ENCODE measurements at regions of chr15 and their contacts with region 1.

Region 1: DNA sequence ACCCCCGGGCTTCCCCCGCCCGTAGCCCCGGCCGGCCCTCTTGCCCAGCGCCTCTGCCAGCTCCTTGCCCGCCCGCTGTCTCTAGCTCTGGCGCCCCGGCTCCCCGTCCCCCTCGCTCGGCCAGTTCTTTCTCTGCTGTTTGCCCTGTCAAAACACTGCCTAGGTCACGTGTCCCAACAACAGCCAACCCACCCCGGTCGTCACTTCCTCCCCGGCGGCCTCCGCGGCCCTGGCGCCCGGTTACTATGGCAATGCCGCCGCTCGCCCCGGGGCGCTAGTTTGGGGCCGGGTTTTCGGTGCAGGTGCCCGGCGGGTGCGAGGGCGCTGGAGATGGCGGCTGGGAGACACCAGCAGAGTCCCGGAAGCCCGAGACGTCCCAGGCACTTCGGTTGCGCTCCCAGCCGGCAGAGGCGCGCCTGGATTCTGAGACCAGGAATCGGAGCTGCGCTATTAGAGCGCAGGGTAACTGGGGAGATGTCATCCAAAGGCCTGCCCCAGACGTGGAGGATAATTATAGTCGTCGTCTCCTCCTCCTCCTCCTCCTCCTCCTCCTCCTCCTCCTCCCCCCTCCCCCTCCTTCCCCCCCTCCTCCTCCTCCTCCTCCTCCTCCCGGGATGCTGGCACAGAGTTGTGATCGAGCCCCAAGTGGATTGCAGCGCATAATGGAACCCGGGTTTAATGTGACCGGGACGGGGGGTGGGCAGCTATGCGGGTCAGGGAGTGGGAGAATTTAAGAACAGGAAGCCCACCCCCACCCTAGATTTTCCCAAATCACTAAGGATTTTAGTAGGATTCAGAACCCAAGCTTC is at the start of gene ATOSA:
- DNase-seq: peak; percentile 84 to 93 (median 90)
- ATAC-seq: peak; percentile 87
- H3K4me3 ChIP-seq: peak within 1 kb of the TSS; percentile 82
- H3K4me3 Mint-ChIP-seq: peak within 1 kb of the TSS; percentile 91 to 100 (median 96)
- H3K27ac ChIP-seq: peak within 1 kb of the TSS; percentile 99
- H3K27ac Mint-ChIP-seq: peak within 1 kb of the TSS; percentile 94 to 100 (median 99)
- H3K4me1 ChIP-seq: peaks cover 35 to 54% of the 10 kb centered on the region in 2 donors
- H3K4me1 Mint-ChIP-seq: peaks cover 31 to 61% (median 46%) of the 10 kb centered on the region in 7 donors
- H3K27me3 ChIP-seq: no peaks in the 10 kb centered on the region
- H3K27me3 Mint-ChIP-seq: peaks cover 0 to 12% (median 0%) of the 10 kb centered on the region in 5 donors
- total RNA-seq, gene ATOSA: 35.1 to 117 (median 95.7) TPM

Region 2: GRCh38 chr15:52256366-52256765 is 423.1 kb before region 1 on chr15:
- CTCF ChIA-PET with region 1: no interaction called
- POLR2A ChIA-PET with region 1: no interaction called
- intact Hi-C with region 1: loop called (anchors 1 to 2 kb)
- DNase-seq: peak; percentile 27 to 80 (median 75)
- ATAC-seq: peak; percentile 98
- H3K4me3 ChIP-seq: peak overlapping the region; percentile 14
- H3K4me3 Mint-ChIP-seq: peak overlapping the region; percentile 49 to 85 (median 72)
- H3K27ac ChIP-seq: no peak overlapping the region
- H3K27ac Mint-ChIP-seq: peak overlapping the region; percentile 4 to 96 (median 65)
- H3K4me1 ChIP-seq: peaks cover 0 to 12% of the 10 kb centered on the region in 2 donors
- H3K4me1 Mint-ChIP-seq: peaks cover 5 to 55% (median 17%) of the 10 kb centered on the region in 7 donors
- H3K27me3 ChIP-seq: no peaks in the 10 kb centered on the region
- H3K27me3 Mint-ChIP-seq: no peaks in the 10 kb centered on the region

Region 3: GRCh38 chr15:52392008-52392687 is 287.3 kb before region 1 on chr15:
- CTCF ChIA-PET with region 1: no interaction called
- POLR2A ChIA-PET with region 1: no interaction called
- intact Hi-C with region 1: no loop called
- DNase-seq: no peak
- ATAC-seq: no peak
- H3K4me3 ChIP-seq: no peak overlapping the region
- H3K4me3 Mint-ChIP-seq: no peak overlapping the region
- H3K27ac ChIP-seq: no peak overlapping the region
- H3K27ac Mint-ChIP-seq: no peak overlapping the region
- H3K4me1 ChIP-seq: no peaks in the 10 kb centered on the region
- H3K4me1 Mint-ChIP-seq: peaks cover 0 to 5% (median 0%) of the 10 kb centered on the region in 7 donors
- H3K27me3 ChIP-seq: no peaks in the 10 kb centered on the region
- H3K27me3 Mint-ChIP-seq: no peaks in the 10 kb centered on the region

Region 4: DNA sequence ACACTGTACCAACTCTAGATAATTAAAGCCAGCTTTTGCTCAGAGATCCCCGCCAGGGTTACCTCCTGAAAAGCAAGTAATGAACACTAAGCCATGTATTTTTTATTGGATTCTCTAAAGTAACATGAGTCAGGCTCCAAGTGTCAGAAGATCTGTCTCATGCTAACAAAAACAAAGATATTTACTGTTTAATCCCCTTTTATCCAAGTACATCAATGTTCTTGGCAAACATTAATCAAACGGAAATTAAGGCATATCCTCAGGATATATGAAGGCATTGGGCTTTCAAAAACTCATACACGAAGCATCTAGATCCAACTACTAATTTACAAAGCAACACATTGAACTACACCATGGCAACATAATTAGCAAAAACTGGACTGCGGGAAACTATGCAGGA is 188.0 kb before region 1 on chr15:
- CTCF ChIA-PET with region 1: no interaction called
- POLR2A ChIA-PET with region 1: no interaction called
- intact Hi-C with region 1: loop called in 1 of 2 experiments (anchors 2 kb)
- DNase-seq: no peak
- ATAC-seq: no peak
- H3K4me3 ChIP-seq: no peak overlapping the region
- H3K4me3 Mint-ChIP-seq: no peak overlapping the region
- H3K27ac ChIP-seq: no peak overlapping the region
- H3K27ac Mint-ChIP-seq: no peak overlapping the region
- H3K4me1 ChIP-seq: peaks cover 5 to 19% of the 10 kb centered on the region in 2 donors
- H3K4me1 Mint-ChIP-seq: peaks cover 40 to 69% (median 47%) of the 10 kb centered on the region in 7 donors
- H3K27me3 ChIP-seq: no peaks in the 10 kb centered on the region
- H3K27me3 Mint-ChIP-seq: no peaks in the 10 kb centered on the region

Region 5: DNA sequence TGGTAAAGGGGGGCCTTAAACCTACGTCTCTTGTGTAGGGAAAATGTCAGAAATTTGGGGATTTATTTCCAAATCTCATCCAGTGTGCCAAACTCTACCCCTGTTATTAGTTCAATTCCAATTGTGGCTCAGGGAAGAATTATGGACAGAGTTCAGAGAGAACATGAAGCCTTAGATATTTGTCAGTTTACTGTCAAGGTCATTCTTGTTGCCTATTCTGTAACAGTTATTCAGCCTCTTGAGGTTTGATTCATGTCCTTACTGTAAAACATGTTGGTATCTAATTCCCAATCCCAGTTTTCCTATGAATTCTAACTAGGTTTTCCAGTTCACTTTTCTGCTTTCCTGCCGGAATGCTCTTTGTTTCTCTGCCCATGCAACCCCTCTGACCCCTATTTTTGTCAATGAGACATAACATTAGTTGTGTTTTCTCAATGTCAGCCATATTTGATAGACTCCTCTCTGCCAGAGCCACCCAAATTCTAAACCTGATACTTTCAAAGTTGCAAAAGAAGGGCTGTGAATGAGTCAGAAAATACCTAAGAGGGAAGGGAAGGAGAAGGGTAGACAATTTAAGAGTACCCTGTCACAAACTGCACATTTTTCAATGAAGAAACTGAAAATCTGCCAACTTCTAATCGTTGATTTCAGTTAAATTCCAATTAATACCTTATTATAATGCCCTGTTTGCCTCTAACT is 52.6 kb before region 1 on chr15:
- CTCF ChIA-PET with region 1: no interaction called
- POLR2A ChIA-PET with region 1: no interaction called
- intact Hi-C with region 1: loop called in 1 of 2 experiments (anchors 10 kb)
- DNase-seq: no peak
- ATAC-seq: no peak
- H3K4me3 ChIP-seq: no peak overlapping the region
- H3K4me3 Mint-ChIP-seq: no peak overlapping the region
- H3K27ac ChIP-seq: no peak overlapping the region
- H3K27ac Mint-ChIP-seq: no peak overlapping the region
- H3K4me1 ChIP-seq: no peaks in the 10 kb centered on the region
- H3K4me1 Mint-ChIP-seq: peaks cover 3 to 22% (median 13%) of the 10 kb centered on the region in 7 donors
- H3K27me3 ChIP-seq: no peaks in the 10 kb centered on the region
- H3K27me3 Mint-ChIP-seq: no peaks in the 10 kb centered on the region

Region 6: DNA sequence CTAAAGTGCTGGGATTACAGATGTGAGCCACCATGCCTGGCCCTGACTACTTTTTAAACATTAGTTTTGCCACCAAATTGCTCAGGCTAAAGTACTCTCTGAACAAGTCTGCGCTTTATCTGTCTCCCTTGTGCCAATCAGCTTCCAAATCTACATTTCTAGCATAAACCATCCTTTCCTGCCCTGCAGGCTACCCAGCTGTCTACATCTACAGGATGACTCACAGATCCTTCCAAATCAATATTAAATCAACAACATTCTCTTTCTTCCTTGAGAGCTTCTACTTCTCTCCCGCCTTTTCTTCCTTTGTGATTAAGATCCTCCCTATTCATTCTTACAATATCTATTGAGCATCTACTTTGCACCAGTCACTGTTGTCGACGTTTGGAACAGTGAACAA is 15.7 kb after region 1 on chr15:
- CTCF ChIA-PET with region 1: no interaction called
- POLR2A ChIA-PET with region 1: interaction called, 15 read pairs
- intact Hi-C with region 1: no loop called
- DNase-seq: no peak
- ATAC-seq: no peak
- H3K4me3 ChIP-seq: no peak overlapping the region
- H3K4me3 Mint-ChIP-seq: no peak overlapping the region
- H3K27ac ChIP-seq: no peak overlapping the region
- H3K27ac Mint-ChIP-seq: no peak overlapping the region
- H3K4me1 ChIP-seq: no peaks in the 10 kb centered on the region
- H3K4me1 Mint-ChIP-seq: no peaks in the 10 kb centered on the region
- H3K27me3 ChIP-seq: no peaks in the 10 kb centered on the region
- H3K27me3 Mint-ChIP-seq: peaks cover 0 to 26% (median 0%) of the 10 kb centered on the region in 5 donors

Measured in naive thymus-derived CD4-positive, alpha-beta T cell (primary cell).